Activated T-helper 1 cell treated with anti-CD3 and anti-CD28 coated beads, Interleukin-12 subunit alpha, Interleukin-12 subunit beta, Interleukin-2, Interleukin-4 antibody, amounts not matched to agents 30 ng/mL and 10 ng/mL and 1 ng/mL, durations not matched to agents 14 hours and 24 hours and 36 hours (primary cell): ENCODE measurements at regions of chr12 and their contacts with region 1.

Region 1: DNA sequence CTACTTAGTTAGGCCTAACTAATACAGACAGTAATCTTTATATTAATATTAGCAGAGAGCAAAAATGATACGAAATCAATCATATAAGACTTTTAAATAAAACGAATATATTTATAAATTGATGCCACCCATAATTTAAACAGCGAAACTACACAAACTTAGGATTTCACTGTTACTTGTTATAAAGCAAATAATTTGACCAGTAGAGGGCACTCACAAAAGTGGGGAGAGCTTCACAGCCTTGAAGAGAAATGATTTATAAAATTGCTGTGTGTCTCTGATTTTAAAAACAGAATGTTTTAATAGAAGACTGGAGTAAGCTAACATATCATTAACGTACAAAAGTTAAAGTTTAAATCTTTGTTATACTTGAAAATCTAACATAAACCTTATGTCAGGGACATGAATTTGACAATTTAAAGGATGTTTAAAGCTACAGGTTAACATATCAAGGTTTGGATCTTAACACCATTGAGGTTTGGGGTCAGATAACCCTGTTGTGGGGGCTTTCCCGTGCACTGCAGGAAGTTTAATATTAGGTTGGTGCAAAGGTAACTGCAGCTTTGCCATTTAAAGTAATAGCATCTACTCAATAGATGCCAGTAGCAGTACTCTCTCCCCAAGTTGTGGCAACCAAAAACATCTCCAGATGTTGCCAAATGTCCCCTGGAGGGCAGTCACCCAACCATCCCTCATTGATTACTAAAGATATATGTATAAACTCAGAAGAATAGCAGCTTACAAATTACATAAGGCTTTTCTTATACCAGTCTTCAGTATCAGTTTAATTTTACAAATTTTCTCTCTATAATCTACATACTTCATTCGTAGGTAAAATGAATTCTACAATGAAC is 9.3 kb downstream of the KRAS start:
- DNase-seq: no peak
- H3K4me3 Mint-ChIP-seq: no peak overlapping the region
- H3K27ac Mint-ChIP-seq: no peak overlapping the region
- H3K4me1 Mint-ChIP-seq: peaks cover 29% of the 10 kb centered on the region
- H3K27me3 Mint-ChIP-seq: no peaks in the 10 kb centered on the region

Region 2: GRCh38 chr12:25364529-25365339 is 123.3 kb after region 1 on chr12:
- intact Hi-C with region 1: loop called (anchors 1 kb)
- DNase-seq: no peak
- H3K4me3 Mint-ChIP-seq: peak overlapping the region; percentile 36
- H3K27ac Mint-ChIP-seq: peak overlapping the region; percentile 94
- H3K4me1 Mint-ChIP-seq: peaks cover 45% of the 10 kb centered on the region
- H3K27me3 Mint-ChIP-seq: peaks cover 5% of the 10 kb centered on the region